Activated CD4-positive, alpha-beta memory T cell treated with anti-CD3 and anti-CD28 coated beads for 36 hours (primary cell): ENCODE measurements at regions of chr3 and their contacts with region 1.

Region 1: GRCh38 chr3:112642912-112643506 is 2.1 kb upstream of the CCDC80 start:
- DNase-seq: peak; percentile 89
- H3K4me3 Mint-ChIP-seq: peak overlapping the region; percentile 63
- H3K27ac Mint-ChIP-seq: no peak overlapping the region
- H3K4me1 Mint-ChIP-seq: peaks cover 16% of the 10 kb centered on the region
- H3K27me3 Mint-ChIP-seq: peaks cover 3% of the 10 kb centered on the region

Region 2: GRCh38 chr3:112653209-112653871 is 10.3 kb after region 1 on chr3:
- CTCF ChIA-PET with region 1: interaction called, 30 read pairs
- POLR2A ChIA-PET with region 1: no interaction called
- intact Hi-C with region 1: no loop called
- DNase-seq: no peak
- H3K4me3 Mint-ChIP-seq: no peak overlapping the region
- H3K27ac Mint-ChIP-seq: no peak overlapping the region
- H3K4me1 Mint-ChIP-seq: peaks cover 11% of the 10 kb centered on the region
- H3K27me3 Mint-ChIP-seq: no peaks in the 10 kb centered on the region

Region 3: DNA sequence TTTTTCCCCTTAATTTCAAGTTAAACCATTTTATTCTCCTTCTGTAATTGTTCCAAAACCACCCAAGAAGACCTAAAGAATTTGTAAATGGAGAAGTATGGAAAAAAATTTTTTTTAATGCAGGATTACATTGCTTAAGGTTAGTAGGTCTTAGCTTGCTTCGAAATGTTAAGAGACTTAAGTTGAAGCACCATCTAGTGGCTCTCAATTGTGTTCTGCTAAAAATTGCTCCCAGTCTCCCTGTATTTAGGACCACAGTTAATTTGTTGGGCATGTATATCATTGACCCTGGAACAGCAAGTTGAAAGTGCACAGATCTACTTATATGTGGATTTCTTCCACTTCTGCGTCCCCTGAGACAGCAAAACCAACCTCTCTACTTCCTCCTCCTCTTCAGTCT is 171.3 kb after region 1 on chr3:
- CTCF ChIA-PET with region 1: interaction called, 21 read pairs
- POLR2A ChIA-PET with region 1: no interaction called
- intact Hi-C with region 1: loop called (anchors 1 kb)
- DNase-seq: no peak
- H3K4me3 Mint-ChIP-seq: no peak overlapping the region
- H3K27ac Mint-ChIP-seq: no peak overlapping the region
- H3K4me1 Mint-ChIP-seq: peaks cover 20% of the 10 kb centered on the region
- H3K27me3 Mint-ChIP-seq: no peaks in the 10 kb centered on the region

Region 4: GRCh38 chr3:112990672-112991602 is 347.9 kb after region 1 on chr3 and contains the start of gene GTPBP8:
- CTCF ChIA-PET with region 1: interaction called, 19 read pairs
- POLR2A ChIA-PET with region 1: no interaction called
- intact Hi-C with region 1: no loop called
- DNase-seq: peak; percentile 93
- H3K4me3 Mint-ChIP-seq: peak within 1 kb of the TSS; percentile 91
- H3K27ac Mint-ChIP-seq: peak within 1 kb of the TSS; percentile 94
- H3K4me1 Mint-ChIP-seq: peaks cover 57% of the 10 kb centered on the region
- H3K27me3 Mint-ChIP-seq: no peaks in the 10 kb centered on the region
- total RNA-seq, gene GTPBP8: 34.7 to 35.7 TPM

Region 5: GRCh38 chr3:113287803-113288648 is 645.0 kb after region 1 on chr3:
- CTCF ChIA-PET with region 1: interaction called, 15 read pairs
- POLR2A ChIA-PET with region 1: no interaction called
- intact Hi-C with region 1: loop called (anchors 2 kb)
- DNase-seq: peak; percentile 55
- H3K4me3 Mint-ChIP-seq: no peak overlapping the region
- H3K27ac Mint-ChIP-seq: no peak overlapping the region
- H3K4me1 Mint-ChIP-seq: peaks cover 3% of the 10 kb centered on the region
- H3K27me3 Mint-ChIP-seq: no peaks in the 10 kb centered on the region